WTC11 (cell line): ENCODE measurements at regions of chr9 and their contacts with region 1.

Region 1: DNA sequence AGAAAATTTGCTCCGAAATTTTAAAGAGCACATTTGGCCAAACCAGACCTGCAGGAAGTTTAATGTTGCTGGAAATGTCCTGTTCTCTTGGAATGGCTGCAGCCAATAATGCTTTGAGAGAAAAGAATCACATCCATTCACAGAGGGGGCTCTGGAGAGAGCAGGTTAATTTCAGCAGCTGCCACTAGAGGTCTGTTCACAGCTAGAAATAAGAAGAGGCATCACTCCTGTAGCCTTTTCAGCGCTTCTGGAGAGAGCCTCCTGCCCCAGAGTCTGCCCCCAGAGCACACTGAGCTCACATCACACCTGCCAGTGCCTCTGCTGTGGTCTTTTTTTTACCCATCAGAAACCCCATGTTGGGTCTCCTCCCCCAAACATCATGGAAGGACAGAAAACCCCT is 124.8 kb upstream of the RAD23B start:
- DNase-seq: peak; percentile 56
- ATAC-seq: peak; percentile 98
- H3K4me3 Mint-ChIP-seq: no peak overlapping the region
- H3K27ac Mint-ChIP-seq: no peak overlapping the region
- H3K4me1 Mint-ChIP-seq: peaks cover 9% of the 10 kb centered on the region; the same call in 1 of the 2 replicates
- H3K27me3 Mint-ChIP-seq: no peaks in the 10 kb centered on the region
- CTCF ChIP-seq: peak; percentile 33; the same call in 1 of the 2 replicates

Region 2: GRCh38 chr9:107070576-107070975 is 87.7 kb before region 1 on chr9:
- CTCF ChIA-PET with region 1: no interaction called
- POLR2A ChIA-PET with region 1: no interaction called
- DNase-seq: no peak
- ATAC-seq: no peak
- H3K4me3 Mint-ChIP-seq: no peak overlapping the region
- H3K27ac Mint-ChIP-seq: 0 out of 2 replicates have a peak overlapping the region, but pooled peaks have one; percentile 22
- H3K4me1 Mint-ChIP-seq: peaks cover 3% of the 10 kb centered on the region
- H3K27me3 Mint-ChIP-seq: no peaks in the 10 kb centered on the region
- CTCF ChIP-seq: no peak

Region 3: GRCh38 chr9:107172160-107172978 is 14.0 kb after region 1 on chr9:
- CTCF ChIA-PET with region 1: interaction called, 19 read pairs
- POLR2A ChIA-PET with region 1: no interaction called
- DNase-seq: peak; percentile 76
- ATAC-seq: peak; percentile 82
- H3K4me3 Mint-ChIP-seq: no peak overlapping the region
- H3K27ac Mint-ChIP-seq: no peak overlapping the region
- H3K4me1 Mint-ChIP-seq: peaks cover 19% of the 10 kb centered on the region
- H3K27me3 Mint-ChIP-seq: no peaks in the 10 kb centered on the region
- CTCF ChIP-seq: peak; percentile 81